Gastrocnemius medialis (tissue), 4 donors: ENCODE measurements at regions of chr1 and their contacts with region 1.

Region 1: DNA sequence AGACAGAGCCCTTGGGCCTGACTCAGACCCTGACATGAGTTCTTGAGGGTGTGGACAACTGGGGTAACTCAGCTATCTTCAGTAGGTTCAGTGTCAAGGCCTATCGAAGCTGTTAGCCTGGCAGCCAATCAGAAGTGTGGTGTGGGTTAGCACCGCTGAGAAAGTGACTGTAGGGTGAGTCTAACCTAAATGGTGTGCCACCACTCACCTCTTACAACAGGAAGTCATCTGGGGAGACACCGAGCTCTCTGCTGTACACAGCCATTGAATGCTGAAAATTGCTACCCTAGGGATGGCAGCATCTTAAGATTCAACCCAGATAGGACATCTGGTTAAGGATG is 44.6 kb downstream of the RASSF5 start:
- DNase-seq: no peak
- ATAC-seq: no peak
- H3K4me3 ChIP-seq: no peak overlapping the region
- H3K27ac ChIP-seq: no peak overlapping the region
- H3K4me1 ChIP-seq: peaks cover 10 to 26% of the 10 kb centered on the region in 2 donors
- H3K27me3 ChIP-seq: no peaks in the 10 kb centered on the region
- CTCF ChIP-seq: no peak
- POLR2A ChIP-seq: no peak

Region 2: DNA sequence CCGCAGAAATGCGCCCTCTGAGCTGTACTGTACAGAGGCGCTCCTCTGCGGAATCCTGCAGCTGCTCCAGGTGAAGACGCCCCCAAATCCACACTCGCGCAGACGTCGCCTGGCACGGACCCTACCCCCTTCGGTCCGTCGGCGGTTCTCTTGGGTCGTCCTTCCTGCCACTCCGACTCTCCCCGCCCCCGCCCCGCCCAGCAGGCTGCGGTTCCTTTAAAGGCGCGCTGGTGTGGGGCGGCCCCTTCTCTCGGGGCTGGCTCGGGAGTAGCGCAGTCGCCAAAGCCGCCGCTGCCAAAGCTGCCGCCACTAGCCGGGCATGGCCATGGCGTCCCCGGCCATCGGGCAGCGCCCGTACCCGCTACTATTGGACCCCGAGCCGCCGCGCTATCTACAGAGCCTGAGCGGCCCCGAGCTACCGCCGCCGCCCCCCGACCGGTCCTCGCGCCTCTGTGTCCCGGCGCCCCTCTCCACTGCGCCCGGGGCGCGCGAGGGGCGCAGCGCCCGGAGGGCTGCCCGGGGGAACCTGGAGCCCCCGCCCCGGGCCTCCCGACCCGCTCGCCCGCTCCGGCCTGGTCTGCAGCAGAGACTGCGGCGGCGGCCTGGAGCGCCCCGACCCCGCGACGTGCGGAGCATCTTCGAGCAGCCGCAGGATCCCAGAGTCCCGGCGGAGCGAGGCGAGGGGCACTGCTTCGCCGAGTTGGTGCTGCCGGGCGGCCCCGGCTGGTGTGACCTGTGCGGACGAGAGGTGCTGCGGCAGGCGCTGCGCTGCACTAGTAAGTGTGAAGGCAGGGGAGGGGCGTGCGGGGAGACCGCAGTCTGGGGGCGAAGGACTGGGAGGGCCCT is 44.4 kb before region 1 on chr1 and contains the start of gene RASSF5:
- in situ Hi-C with region 1: no loop called
- intact Hi-C with region 1: loop called (anchors 5 kb)
- DNase-seq: peak; percentile 45 to 84
- ATAC-seq: peak; percentile 53 to 62
- H3K4me3 ChIP-seq: peak within 1 kb of the TSS; percentile 55 to 78 (median 68)
- H3K27ac ChIP-seq: peak within 1 kb of the TSS in 3 of 4 donors; percentile 37 to 64 (median 61)
- H3K4me1 ChIP-seq: peaks cover 24 to 36% of the 10 kb centered on the region in 2 donors
- H3K27me3 ChIP-seq: peaks cover 13 to 26% (median 19%) of the 10 kb centered on the region in 3 donors
- CTCF ChIP-seq: no peak
- POLR2A ChIP-seq: peak; percentile 32 to 75
- total RNA-seq, gene RASSF5: 5.9 to 15.9 (median 9.4) TPM